ENCODE measurements at regions of chr17 and their contacts with region 1.

Region 1: DNA sequence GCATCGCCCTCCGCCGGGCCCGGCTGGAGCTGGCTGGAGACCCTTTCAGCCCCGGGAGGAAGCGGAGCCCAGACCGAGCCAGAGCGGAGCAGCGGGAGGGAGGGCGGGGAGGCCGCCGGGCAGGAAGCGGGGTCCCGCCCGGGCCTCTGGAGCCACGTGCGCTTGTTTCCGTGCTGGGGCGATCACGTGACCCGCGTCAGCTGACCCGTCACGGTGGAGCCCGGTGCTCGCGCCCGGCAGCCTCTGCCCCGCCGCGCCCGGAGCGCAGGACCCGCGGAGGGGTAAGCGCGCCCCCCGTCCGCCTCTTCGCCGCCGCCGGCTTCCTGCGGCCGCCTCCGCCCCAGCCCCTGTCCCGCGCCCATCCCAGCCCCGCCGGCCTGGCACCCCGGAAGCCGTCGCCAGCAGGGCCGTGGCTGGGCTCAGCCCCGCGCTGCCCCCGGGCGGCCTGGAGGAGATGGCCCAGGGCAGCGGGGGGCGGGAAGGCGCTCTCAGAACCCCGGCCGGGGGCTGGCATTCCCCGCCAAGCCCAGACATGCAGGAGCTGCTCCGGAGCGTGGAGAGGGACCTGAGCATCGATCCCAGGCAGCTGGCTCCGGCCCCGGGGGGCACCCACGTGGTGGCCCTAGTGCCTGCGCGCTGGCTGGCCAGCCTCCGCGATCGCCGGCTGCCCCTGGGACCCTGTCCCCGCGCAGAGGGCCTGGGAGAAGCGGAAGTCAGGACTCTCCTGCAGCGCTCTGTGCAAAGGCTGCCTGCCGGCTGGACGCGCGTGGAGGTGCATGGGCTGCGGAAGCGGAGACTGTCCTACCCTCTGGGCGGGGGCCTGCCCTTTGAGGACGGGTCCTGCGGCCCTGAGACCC is at the start of gene WDR81:
- DNase-seq: peak; percentile 94 to 96 (median 96)
- ATAC-seq: peak; percentile 48 to 86 (median 84)
- H3K4me3 ChIP-seq: peak within 1 kb of the TSS; percentile 52 to 87 (median 66)
- H3K27ac ChIP-seq: peak within 1 kb of the TSS; percentile 64 to 96 (median 88)
- H3K4me1 ChIP-seq: peaks cover 0 to 87% (median 32%) of the 10 kb centered on the region in 12 donors
- H3K27me3 ChIP-seq: no peaks in the 10 kb centered on the region
- CTCF ChIP-seq: peak in 2 of 12 donors; percentile 8 to 25
- POLR2A ChIP-seq: peak; percentile 24 to 35
- total RNA-seq, gene WDR81: 7.2 to 29.0 (median 9.3) TPM

Region 2: GRCh38 chr17:1323336-1323735 is 401.4 kb before region 1 on chr17:
- intact Hi-C with region 1: no loop called
- DNase-seq: no peak
- ATAC-seq: no peak
- H3K4me3 ChIP-seq: no peak overlapping the region
- H3K27ac ChIP-seq: no peak overlapping the region
- H3K4me1 ChIP-seq: peaks cover 0 to 8% (median 0%) of the 10 kb centered on the region in 12 donors
- H3K27me3 ChIP-seq: no peaks in the 10 kb centered on the region
- CTCF ChIP-seq: no peak
- POLR2A ChIP-seq: no peak

Region 3: DNA sequence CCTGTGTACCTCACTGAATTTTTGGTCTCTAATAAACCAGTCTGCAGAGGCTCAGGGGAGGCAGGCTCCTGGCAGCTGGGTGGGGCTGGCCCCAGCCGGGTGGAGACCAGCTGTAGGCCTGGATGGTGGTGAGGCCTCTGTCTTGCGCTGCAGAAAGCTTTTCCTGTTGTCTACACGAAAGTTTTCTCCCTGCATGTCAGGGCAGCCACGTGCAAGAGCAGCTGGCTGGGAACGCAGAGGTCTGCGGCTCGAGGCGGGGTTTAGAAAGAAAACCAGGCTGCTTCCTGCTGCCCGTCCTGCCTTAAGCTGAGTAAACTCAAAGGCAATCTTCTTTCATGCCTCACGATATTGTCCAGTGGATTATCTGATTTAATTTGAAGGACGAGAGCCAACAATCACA is 39.5 kb after region 1 on chr17:
- intact Hi-C with region 1: no loop called
- DNase-seq: peak; percentile 70 to 89 (median 88)
- ATAC-seq: peak; percentile 48 to 83 (median 70)
- H3K4me3 ChIP-seq: peak overlapping the region in 8 of 12 donors; percentile 41 to 68 (median 56)
- H3K27ac ChIP-seq: peak overlapping the region; percentile 52 to 89 (median 82)
- H3K4me1 ChIP-seq: peaks cover 0 to 57% (median 11%) of the 10 kb centered on the region in 12 donors
- H3K27me3 ChIP-seq: no peaks in the 10 kb centered on the region
- CTCF ChIP-seq: no peak
- POLR2A ChIP-seq: no peak

Region 4: DNA sequence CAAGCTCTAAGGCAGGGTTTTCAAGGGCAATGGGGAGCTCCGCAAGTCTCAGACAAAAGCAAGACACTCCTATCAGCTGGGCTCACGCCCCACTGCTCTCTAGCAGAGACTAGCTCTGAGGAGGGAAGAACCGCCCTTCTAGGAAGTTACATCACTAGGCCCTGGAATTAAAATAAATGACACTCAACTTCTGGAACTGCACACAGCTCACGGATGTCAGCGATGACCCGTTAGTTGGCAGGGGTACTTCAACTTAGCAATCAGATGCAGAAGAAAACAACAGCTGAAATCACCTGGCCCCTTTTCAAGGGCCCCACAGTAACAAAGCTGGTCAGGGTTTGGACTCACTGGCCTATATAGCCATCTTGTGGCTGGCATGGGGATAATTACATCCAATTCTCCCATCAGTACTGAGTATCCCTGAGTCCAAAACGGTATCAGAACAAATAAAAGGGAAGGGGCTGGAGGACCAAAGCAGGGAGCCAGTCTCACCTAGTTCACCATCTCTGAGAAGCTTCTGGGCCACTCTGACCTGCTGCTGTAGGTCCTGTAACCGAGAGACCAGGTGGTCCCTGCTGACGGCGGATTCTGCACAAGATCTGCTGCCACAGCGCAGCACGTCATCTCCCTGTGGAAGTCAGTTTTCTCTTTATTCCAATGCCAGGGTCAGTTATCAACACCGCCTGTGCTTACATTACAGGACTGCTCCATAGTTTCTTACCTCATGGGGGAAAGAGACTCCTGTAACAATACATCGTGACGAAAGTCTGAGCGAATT is 59.3 kb after region 1 on chr17:
- intact Hi-C with region 1: loop called in 9 of 10 experiments (anchors 1 to 5 kb)
- DNase-seq: peak in 4 of 5 donors; percentile 75 to 91 (median 82)
- ATAC-seq: peak; percentile 74 to 86 (median 80)
- H3K4me3 ChIP-seq: peak overlapping the region in 8 of 12 donors; percentile 12 to 43 (median 20)
- H3K27ac ChIP-seq: peak overlapping the region; percentile 83 to 97 (median 92)
- H3K4me1 ChIP-seq: peaks cover 5 to 89% (median 60%) of the 10 kb centered on the region in 12 donors
- H3K27me3 ChIP-seq: no peaks in the 10 kb centered on the region
- CTCF ChIP-seq: peak; percentile 45 to 81 (median 72)
- POLR2A ChIP-seq: peak in 1 of 2 donors; percentile 69

Region 5: GRCh38 chr17:1847191-1847590 is 122.5 kb after region 1 on chr17:
- intact Hi-C with region 1: loop called in 1 of 10 experiments (anchors 5 kb)
- DNase-seq: peak in 4 of 5 donors; percentile 27 to 81 (median 63)
- ATAC-seq: peak; percentile 92 to 98 (median 96)
- H3K4me3 ChIP-seq: no peak overlapping the region
- H3K27ac ChIP-seq: peak overlapping the region in 10 of 12 donors; percentile 8 to 76 (median 51)
- H3K4me1 ChIP-seq: peaks cover 0 to 27% (median 10%) of the 10 kb centered on the region in 12 donors
- H3K27me3 ChIP-seq: no peaks in the 10 kb centered on the region
- CTCF ChIP-seq: no peak
- POLR2A ChIP-seq: no peak

Region 6: DNA sequence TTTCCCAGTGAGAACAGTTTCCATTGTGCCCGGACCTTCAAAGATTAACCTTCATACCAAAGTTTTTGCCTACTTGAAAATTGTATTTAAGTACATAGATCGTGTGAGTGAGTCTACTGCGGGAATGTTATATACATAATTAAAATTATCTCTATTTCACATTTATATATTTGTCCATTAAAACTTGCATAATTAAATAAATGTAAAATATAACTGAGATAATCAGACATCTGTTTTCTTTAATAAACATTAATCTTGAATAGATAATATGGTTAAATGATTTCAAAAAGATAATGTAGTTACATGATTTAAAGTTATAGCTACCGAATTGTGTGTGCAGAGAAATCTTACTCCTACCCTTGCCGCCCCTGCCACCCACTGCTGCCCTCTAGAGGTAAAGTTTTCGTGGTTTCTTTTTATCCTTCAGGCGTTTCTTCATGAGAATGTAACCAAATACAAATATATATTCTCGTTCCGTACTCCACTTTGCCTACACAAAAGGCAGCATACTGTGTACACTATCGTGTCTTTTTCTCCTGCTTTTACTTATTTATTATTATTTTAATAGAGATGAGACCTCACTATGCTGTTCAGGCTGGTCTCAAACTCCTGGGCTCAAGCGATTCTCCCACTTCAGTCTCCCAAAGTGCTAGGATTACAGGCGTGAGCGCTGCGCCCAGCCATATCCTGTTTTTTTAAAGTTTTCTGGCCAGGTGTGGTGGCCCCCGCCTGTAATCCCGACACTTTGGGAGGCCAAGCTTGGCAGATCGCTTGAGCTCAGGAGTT is 140.7 kb after region 1 on chr17:
- intact Hi-C with region 1: loop called in 7 of 10 experiments (anchors 5 kb)
- DNase-seq: no peak
- ATAC-seq: peak in 2 of 4 donors; percentile 41 to 51
- H3K4me3 ChIP-seq: no peak overlapping the region
- H3K27ac ChIP-seq: no peak overlapping the region
- H3K4me1 ChIP-seq: no peaks in the 10 kb centered on the region
- H3K27me3 ChIP-seq: no peaks in the 10 kb centered on the region
- CTCF ChIP-seq: peak; percentile 49 to 73 (median 66)
- POLR2A ChIP-seq: no peak

Measured in heart left ventricle (tissue), 16 donors.